Motor neuron (in vitro differentiated cells): ENCODE measurements at regions of chr20 and their contacts with region 1.

Region 1: GRCh38 chr20:52379723-52380336 is 188.3 kb upstream of the ZFP64 start:
- ATAC-seq: no peak
- H3K4me3 ChIP-seq: no peak overlapping the region
- H3K27ac ChIP-seq: no peak overlapping the region
- H3K4me1 ChIP-seq: no peaks in the 10 kb centered on the region

Region 2: GRCh38 chr20:52104546-52105441 is 275.0 kb before region 1 on chr20:
- in situ Hi-C with region 1: no loop called
- ATAC-seq: peak; percentile 16 to 82 (median 69)
- H3K4me3 ChIP-seq: peak overlapping the region; percentile 31 to 51 (median 45)
- H3K27ac ChIP-seq: no peak overlapping the region
- H3K4me1 ChIP-seq: peaks cover 3 to 13% of the 10 kb centered on the region in 2 donors

Region 3: GRCh38 chr20:52242237-52243230 is 137.3 kb before region 1 on chr20:
- in situ Hi-C with region 1: loop called in 2 of 9 experiments (anchors 25 kb)
- ATAC-seq: no peak
- H3K4me3 ChIP-seq: no peak overlapping the region
- H3K27ac ChIP-seq: no peak overlapping the region
- H3K4me1 ChIP-seq: peaks cover 0 to 3% of the 10 kb centered on the region in 2 donors

Region 4: GRCh38 chr20:52256454-52256853 is 123.4 kb before region 1 on chr20:
- in situ Hi-C with region 1: loop called in 1 of 9 experiments (anchors 10 kb)
- ATAC-seq: no peak
- H3K4me3 ChIP-seq: no peak overlapping the region
- H3K27ac ChIP-seq: no peak overlapping the region
- H3K4me1 ChIP-seq: no peaks in the 10 kb centered on the region

Region 5: GRCh38 chr20:52275181-52275691 is 104.6 kb before region 1 on chr20:
- in situ Hi-C with region 1: no loop called
- ATAC-seq: peak in 1 of 8 experiments; percentile 39
- H3K4me3 ChIP-seq: no peak overlapping the region
- H3K27ac ChIP-seq: no peak overlapping the region
- H3K4me1 ChIP-seq: peaks cover 3 to 24% of the 10 kb centered on the region in 2 donors

Region 6: GRCh38 chr20:52577696-52578095 is 197.9 kb after region 1 on chr20:
- in situ Hi-C with region 1: no loop called
- ATAC-seq: no peak
- H3K4me3 ChIP-seq: no peak overlapping the region
- H3K27ac ChIP-seq: no peak overlapping the region
- H3K4me1 ChIP-seq: no peaks in the 10 kb centered on the region

Region 7: DNA sequence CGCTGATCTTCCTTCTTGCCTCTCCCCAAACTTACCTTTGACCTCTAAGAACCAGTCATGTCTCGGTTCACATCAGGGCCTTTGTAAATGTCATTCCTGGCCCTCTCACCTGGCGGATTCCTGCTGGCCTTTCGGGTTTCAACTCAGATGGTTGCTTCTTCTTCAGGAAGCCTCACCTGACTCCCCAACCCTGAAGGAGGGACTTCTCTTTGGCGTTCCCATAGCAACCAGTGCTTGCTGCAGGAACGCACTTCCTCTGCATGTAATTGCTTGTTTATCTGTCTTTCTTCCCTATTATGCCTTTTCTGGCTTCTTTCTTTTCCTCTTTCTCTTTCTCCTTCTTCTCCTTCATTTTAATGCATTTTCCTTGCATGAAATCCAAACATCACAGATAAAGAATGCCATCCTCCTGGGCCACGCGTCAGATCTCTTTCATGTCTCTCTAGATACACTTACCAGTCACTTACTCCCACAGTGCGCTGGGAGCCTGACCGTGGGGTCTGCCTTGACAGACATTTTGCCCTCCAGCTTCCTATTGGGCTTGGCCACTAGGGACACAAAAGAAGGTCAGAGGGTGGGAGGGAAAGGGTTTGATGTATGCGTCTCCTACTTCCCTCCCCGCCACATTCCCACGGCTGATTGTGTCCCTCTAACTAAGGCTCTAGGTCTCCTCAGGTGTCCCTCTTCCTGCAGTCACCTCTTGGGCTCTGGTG is 296.6 kb after region 1 on chr20:
- in situ Hi-C with region 1: no loop called
- ATAC-seq: no peak
- H3K4me3 ChIP-seq: no peak overlapping the region
- H3K27ac ChIP-seq: no peak overlapping the region
- H3K4me1 ChIP-seq: peaks cover 4 to 10% of the 10 kb centered on the region in 2 donors